Breast epithelium (tissue), 4 donors: ENCODE measurements at regions of chrX and their contacts with region 1.

Region 1: GRCh38 chrX:30005813-30006212 is 209.6 kb upstream of the MAGEB2 start:
- DNase-seq: no peak
- H3K4me3 ChIP-seq: no peak overlapping the region
- H3K27ac ChIP-seq: no peak overlapping the region
- H3K4me1 ChIP-seq: no peaks in the 10 kb centered on the region
- H3K27me3 ChIP-seq: peaks cover 0 to 9% of the 10 kb centered on the region in 2 donors
- CTCF ChIP-seq: no peak
- POLR2A ChIP-seq: no peak

Region 2: DNA sequence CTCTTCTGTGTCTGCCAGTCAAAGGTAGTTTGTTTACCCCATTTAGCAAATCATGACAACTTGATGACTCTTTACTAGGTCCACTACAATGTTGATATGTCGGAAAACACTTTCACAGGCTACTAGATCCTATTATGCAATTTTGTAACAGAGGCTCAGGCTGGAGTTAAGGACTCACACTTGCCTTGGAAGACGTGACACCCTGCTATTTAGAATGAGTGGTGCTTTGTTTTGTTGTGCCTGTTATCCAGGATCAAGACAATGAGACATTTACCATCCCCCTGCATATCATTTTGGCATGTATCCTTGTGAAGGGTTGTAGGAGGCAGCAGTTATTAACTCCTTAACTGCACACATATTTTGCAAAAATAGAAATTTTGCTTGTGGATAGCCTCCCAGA is 1154.9 kb before region 1 on chrX:
- intact Hi-C with region 1: loop called (anchors 10 kb)
- DNase-seq: no peak
- H3K4me3 ChIP-seq: no peak overlapping the region
- H3K27ac ChIP-seq: no peak overlapping the region
- H3K4me1 ChIP-seq: no peaks in the 10 kb centered on the region
- H3K27me3 ChIP-seq: peaks cover 0 to 10% of the 10 kb centered on the region in 2 donors
- CTCF ChIP-seq: no peak
- POLR2A ChIP-seq: no peak

Region 3: GRCh38 chrX:29724316-29724715 is 281.5 kb before region 1 on chrX:
- intact Hi-C with region 1: no loop called
- DNase-seq: no peak
- H3K4me3 ChIP-seq: no peak overlapping the region
- H3K27ac ChIP-seq: no peak overlapping the region
- H3K4me1 ChIP-seq: no peaks in the 10 kb centered on the region
- H3K27me3 ChIP-seq: peaks cover 0 to 4% of the 10 kb centered on the region in 2 donors
- CTCF ChIP-seq: no peak
- POLR2A ChIP-seq: no peak

Region 4: GRCh38 chrX:30085571-30085970 is 79.8 kb after region 1 on chrX:
- intact Hi-C with region 1: no loop called
- DNase-seq: no peak
- H3K4me3 ChIP-seq: no peak overlapping the region
- H3K27ac ChIP-seq: no peak overlapping the region
- H3K4me1 ChIP-seq: no peaks in the 10 kb centered on the region
- H3K27me3 ChIP-seq: no peaks in the 10 kb centered on the region
- CTCF ChIP-seq: no peak
- POLR2A ChIP-seq: no peak